ENCODE measurements at regions of chr2 and their contacts with region 1.

Region 1: DNA sequence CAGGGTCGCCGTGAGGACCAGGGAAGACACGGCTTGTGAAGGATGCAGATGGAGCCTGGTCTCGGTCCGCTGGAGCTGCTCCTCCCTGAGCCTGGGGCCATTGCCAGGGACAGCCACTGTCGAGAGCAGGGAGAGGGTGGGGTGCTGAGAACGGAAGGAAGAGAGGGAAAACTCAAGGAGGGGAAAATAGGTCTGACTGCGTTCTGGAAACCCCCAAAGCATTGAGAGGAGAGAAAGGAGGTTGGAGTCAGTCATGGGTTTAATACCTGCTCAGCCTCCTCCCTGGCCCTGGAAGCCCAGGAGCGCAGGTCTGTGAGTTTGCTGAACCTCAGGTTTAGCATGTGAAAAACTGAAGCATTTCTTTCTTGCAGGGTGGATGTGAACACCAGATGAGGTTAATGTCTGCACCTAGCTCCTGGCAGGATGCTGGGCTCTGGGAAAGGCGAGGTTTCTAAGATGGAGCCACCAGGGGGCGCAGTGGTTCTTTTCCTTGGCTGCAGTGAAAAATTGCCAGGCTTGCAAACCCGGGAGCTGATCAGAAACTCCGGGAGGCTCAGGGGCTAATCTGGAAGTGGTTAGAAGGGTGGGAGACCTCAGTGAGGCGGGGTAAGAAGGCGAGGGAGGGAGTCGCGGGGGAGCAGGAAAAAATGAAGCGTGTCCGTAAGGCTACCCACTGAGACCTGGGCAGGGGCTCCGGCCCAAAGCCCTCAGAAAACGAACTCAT is 33.6 kb upstream of the RNF149 start:
- DNase-seq: peak; percentile 84
- H3K4me3 Mint-ChIP-seq: no peak overlapping the region
- H3K27ac Mint-ChIP-seq: no peak overlapping the region
- H3K4me1 Mint-ChIP-seq: peaks cover 34% of the 10 kb centered on the region
- H3K27me3 Mint-ChIP-seq: no peaks in the 10 kb centered on the region
- CTCF ChIP-seq: peak; percentile 74

Region 2: DNA sequence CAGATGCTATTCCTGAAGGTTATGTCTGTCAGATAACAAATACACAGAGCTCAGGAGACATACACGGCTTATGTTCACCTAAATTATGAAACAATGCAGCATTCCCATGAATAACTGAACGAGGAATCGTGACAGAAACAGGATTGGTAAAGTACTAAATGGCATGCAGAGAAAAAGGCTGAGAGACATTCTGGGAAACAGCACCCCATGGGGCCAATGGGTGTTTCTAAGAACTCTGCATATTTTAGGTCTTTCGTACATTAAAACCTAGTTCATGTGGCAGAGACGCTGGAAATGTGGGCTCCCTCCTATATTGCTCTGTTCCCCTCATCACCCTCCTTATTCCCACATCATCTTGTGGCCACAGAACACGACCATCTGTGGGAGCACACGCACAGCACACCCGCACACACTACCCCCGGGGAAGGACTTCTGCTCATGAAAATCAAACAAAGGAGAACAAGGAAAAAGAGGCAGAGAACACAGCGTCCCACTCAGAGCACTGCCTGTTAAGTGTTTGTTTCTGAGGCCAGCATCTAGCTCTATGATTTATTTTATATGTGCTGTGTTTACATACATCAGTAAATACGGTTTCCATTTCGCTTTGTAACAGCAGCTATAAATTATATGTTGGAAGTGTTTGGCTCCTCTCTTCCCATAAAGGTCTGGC is 1343.3 kb before region 1 on chr2:
- CTCF ChIA-PET with region 1: no interaction called
- intact Hi-C with region 1: no loop called
- DNase-seq: no peak
- H3K4me3 Mint-ChIP-seq: no peak overlapping the region
- H3K27ac Mint-ChIP-seq: no peak overlapping the region
- H3K4me1 Mint-ChIP-seq: no peaks in the 10 kb centered on the region
- H3K27me3 Mint-ChIP-seq: peaks cover 44% of the 10 kb centered on the region
- CTCF ChIP-seq: no peak

Region 3: DNA sequence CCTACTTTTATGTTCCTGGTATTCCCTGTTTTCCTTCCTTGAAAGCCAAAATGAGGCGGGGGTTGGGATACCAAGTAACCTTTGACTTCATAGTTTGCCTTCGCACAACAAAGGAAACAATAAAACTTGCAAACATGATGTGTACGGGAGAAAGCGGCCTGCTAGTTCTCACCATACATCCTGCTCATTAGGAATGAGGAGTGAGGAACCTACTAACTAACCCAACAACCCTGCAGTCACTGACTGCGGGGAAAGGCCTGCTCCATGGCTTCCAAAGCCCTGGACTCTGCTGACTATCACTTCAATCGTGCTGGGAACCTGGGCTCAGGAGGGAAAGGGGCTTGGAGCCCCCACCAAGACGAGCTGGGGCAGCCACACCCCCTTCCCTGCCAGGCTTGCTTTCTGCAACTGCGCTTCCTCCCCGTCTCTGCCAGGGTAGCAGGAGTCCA is 315.8 kb before region 1 on chr2:
- CTCF ChIA-PET with region 1: interaction called, 10 read pairs
- intact Hi-C with region 1: no loop called
- DNase-seq: no peak
- H3K4me3 Mint-ChIP-seq: no peak overlapping the region
- H3K27ac Mint-ChIP-seq: no peak overlapping the region
- H3K4me1 Mint-ChIP-seq: no peaks in the 10 kb centered on the region
- H3K27me3 Mint-ChIP-seq: no peaks in the 10 kb centered on the region
- CTCF ChIP-seq: no peak

Region 4: DNA sequence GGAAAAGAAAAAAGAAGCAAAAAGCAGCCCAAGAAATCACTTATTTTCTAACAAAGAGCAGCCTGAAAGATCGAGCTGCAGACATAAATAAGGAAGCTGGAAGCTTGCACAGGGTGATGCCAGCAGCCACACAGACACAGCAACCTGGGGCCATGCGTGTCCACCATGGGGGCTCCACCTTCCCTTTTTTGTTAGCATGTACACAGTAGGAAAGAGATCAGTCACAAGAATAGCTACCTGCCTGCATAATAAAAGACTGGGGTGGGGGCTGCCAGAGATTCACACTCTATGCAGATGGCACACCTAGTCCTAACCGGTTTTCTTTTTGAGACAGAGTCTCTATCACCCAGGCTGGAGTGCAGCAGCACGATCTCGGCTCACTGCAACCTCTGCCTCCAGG is 92.2 kb before region 1 on chr2:
- CTCF ChIA-PET with region 1: no interaction called
- intact Hi-C with region 1: no loop called
- DNase-seq: no peak
- H3K4me3 Mint-ChIP-seq: no peak overlapping the region
- H3K27ac Mint-ChIP-seq: no peak overlapping the region
- H3K4me1 Mint-ChIP-seq: peaks cover 22% of the 10 kb centered on the region
- H3K27me3 Mint-ChIP-seq: no peaks in the 10 kb centered on the region
- CTCF ChIP-seq: no peak

Region 5: DNA sequence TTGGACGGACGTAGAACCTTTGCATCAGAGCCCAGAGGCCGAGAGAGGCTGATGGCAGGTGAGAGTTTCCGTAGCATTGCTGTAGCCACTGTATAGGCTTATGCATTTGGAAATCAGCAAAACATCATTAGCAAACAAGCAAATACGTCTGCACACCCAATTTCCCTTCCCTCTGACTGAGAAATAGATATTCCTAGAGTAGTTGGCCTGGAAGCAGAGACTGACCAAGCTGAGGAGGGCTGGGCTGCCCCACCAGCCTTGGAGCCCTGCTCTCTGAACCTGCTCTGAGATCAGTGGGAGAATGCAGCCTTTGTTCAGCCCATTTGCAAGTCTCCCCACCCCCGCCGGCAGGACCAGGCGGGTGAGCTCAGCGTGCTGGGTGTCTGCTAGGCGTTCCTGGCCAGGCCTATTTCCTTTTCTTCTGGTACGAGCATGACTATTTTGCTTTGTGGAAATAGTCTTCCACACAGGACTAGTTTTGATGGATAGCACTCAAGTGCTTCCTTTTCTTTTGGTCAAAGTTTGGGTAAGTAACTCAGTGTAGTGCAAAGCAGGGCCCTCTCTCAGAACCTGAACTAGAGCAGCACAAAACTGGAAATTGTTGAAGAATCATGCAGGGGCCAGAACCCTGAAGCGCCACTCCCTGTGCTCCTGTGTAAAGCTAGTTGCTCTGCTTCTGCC is 11.7 kb before region 1 on chr2:
- CTCF ChIA-PET with region 1: interaction called, 12 read pairs
- intact Hi-C with region 1: no loop called
- DNase-seq: peak; percentile 83
- H3K4me3 Mint-ChIP-seq: no peak overlapping the region
- H3K27ac Mint-ChIP-seq: peak overlapping the region; percentile 66
- H3K4me1 Mint-ChIP-seq: no peaks in the 10 kb centered on the region
- H3K27me3 Mint-ChIP-seq: no peaks in the 10 kb centered on the region
- CTCF ChIP-seq: no peak

Region 6: GRCh38 chr2:101387151-101387807 is 45.2 kb after region 1 on chr2 and contains the start of gene CREG2:
- CTCF ChIA-PET with region 1: interaction called, 16 read pairs
- intact Hi-C with region 1: loop called (anchors 1 kb)
- DNase-seq: peak; percentile 86
- H3K4me3 Mint-ChIP-seq: peak within 1 kb of the TSS; percentile 74
- H3K27ac Mint-ChIP-seq: no peak within 1 kb of the TSS
- H3K4me1 Mint-ChIP-seq: no peaks in the 10 kb centered on the region
- H3K27me3 Mint-ChIP-seq: peaks cover 12% of the 10 kb centered on the region
- CTCF ChIP-seq: no peak
- total RNA-seq, gene CREG2: 1.3 and 2.4 TPM in 2 replicates